Natural killer cell (primary cell): ENCODE measurements at regions of chr9 and their contacts with region 1.

Region 1: GRCh38 chr9:71675129-71675856 is 93.0 kb downstream of the CEMIP2 start:
- DNase-seq: no peak
- ATAC-seq: no peak
- H3K4me3 ChIP-seq: no peak overlapping the region
- H3K4me3 Mint-ChIP-seq: no peak overlapping the region
- H3K27ac ChIP-seq: no peak overlapping the region
- H3K27ac Mint-ChIP-seq: no peak overlapping the region
- H3K4me1 ChIP-seq: peaks cover 7% of the 10 kb centered on the region
- H3K4me1 Mint-ChIP-seq: peaks cover 35 to 42% of the 10 kb centered on the region in 2 donors
- H3K27me3 ChIP-seq: no peaks in the 10 kb centered on the region
- H3K27me3 Mint-ChIP-seq: no peaks in the 10 kb centered on the region
- CTCF ChIP-seq: no peak

Region 2: GRCh38 chr9:71642056-71642455 is 33.2 kb before region 1 on chr9:
- intact Hi-C with region 1: loop called (anchors 5 kb)
- DNase-seq: no peak
- ATAC-seq: no peak
- H3K4me3 ChIP-seq: no peak overlapping the region
- H3K4me3 Mint-ChIP-seq: no peak overlapping the region
- H3K27ac ChIP-seq: no peak overlapping the region
- H3K27ac Mint-ChIP-seq: no peak overlapping the region
- H3K4me1 ChIP-seq: peaks cover 37% of the 10 kb centered on the region
- H3K4me1 Mint-ChIP-seq: peaks cover 44 to 49% of the 10 kb centered on the region in 2 donors
- H3K27me3 ChIP-seq: no peaks in the 10 kb centered on the region
- H3K27me3 Mint-ChIP-seq: no peaks in the 10 kb centered on the region
- CTCF ChIP-seq: no peak

Region 3: DNA sequence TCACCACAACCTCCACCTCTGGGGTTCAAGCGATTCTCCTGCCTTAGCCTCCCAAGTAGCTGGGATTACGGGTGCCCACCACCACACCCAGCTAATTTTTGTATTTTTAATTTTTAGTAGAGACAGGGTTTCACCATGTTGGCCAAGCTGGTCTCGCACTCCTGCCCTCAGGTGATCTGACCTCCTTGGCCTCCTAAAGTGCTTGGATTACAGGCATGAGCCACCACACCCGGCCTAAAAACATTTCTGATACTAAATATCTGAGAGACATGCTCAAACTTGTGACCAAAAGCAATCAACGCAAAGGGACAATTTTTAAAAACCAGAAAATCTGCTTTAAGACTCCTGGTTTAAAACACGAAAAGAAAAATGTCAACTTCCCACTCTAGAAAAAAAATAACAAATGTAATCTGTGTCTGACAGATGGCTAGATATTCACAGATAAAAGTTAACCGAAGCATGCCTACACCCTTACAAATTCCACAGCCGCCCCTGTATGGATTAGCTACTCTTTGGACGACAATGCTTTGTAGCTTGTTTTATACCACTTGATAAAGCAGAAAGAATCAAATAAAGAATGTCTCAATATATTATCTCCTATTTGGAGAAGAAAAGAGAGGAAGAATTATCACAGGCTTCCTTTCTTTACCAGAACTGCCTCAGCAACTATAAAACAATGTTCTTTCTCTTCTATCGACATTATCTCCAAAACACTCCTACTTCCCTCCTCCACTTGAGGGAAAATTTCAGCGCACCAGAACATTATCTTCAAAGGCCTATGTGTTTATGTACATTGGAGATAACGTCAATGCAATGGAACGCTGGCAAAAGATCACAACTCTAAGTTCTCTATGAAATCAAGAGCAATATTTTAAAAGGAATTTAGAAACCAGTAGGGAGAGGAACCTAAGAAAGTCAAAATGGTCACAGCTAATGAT is 66.7 kb after region 1 on chr9:
- intact Hi-C with region 1: no loop called
- DNase-seq: no peak
- ATAC-seq: no peak
- H3K4me3 ChIP-seq: no peak overlapping the region
- H3K4me3 Mint-ChIP-seq: no peak overlapping the region
- H3K27ac ChIP-seq: no peak overlapping the region
- H3K27ac Mint-ChIP-seq: peak overlapping the region; percentile 21 to 72
- H3K4me1 ChIP-seq: no peaks in the 10 kb centered on the region
- H3K4me1 Mint-ChIP-seq: peaks cover 27% of the 10 kb centered on the region in 2 donors
- H3K27me3 ChIP-seq: no peaks in the 10 kb centered on the region
- H3K27me3 Mint-ChIP-seq: no peaks in the 10 kb centered on the region
- CTCF ChIP-seq: no peak